MCF 10A (cell line): ENCODE measurements at regions of chr13 and their contacts with region 1.

Region 1: GRCh38 chr13:19289180-19289579 is 107.6 kb upstream of the TUBA3C start:
- DNase-seq: no peak
- H3K4me3 Mint-ChIP-seq: no peak overlapping the region
- H3K27ac Mint-ChIP-seq: no peak overlapping the region
- H3K4me1 Mint-ChIP-seq: no peaks in the 10 kb centered on the region
- H3K27me3 Mint-ChIP-seq: peaks cover 81% of the 10 kb centered on the region
- CTCF ChIP-seq: no peak

Region 2: GRCh38 chr13:19153782-19154450 is 135.3 kb before region 1 on chr13:
- CTCF ChIA-PET with region 1: no interaction called
- POLR2A ChIA-PET with region 1: no interaction called
- intact Hi-C with region 1: loop called (anchors 5 kb)
- DNase-seq: no peak
- H3K4me3 Mint-ChIP-seq: no peak overlapping the region
- H3K27ac Mint-ChIP-seq: no peak overlapping the region
- H3K4me1 Mint-ChIP-seq: no peaks in the 10 kb centered on the region
- H3K27me3 Mint-ChIP-seq: no peaks in the 10 kb centered on the region
- CTCF ChIP-seq: peak; percentile 26

Region 3: DNA sequence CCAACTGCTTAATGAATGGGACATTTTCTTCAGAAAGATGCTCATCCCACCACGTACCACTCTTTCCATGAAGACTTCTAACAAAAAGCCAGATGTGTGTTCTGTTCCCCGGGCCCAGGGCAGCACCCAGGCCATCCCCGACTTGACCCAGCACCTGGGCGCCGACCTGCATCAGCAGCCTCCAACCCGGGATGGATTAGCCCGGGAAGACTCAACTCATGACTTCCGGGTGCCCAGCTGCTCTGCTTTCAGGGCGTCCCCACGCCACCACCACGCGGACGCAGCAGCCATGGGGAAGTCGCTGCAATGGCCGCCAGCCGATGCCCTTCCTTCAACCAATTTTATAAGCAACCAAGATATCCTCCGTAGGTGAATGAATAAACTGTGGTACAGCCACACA is 16.3 kb after region 1 on chr13:
- CTCF ChIA-PET with region 1: no interaction called
- POLR2A ChIA-PET with region 1: no interaction called
- intact Hi-C with region 1: no loop called
- DNase-seq: no peak
- H3K4me3 Mint-ChIP-seq: no peak overlapping the region
- H3K27ac Mint-ChIP-seq: no peak overlapping the region
- H3K4me1 Mint-ChIP-seq: no peaks in the 10 kb centered on the region
- H3K27me3 Mint-ChIP-seq: peaks cover 41% of the 10 kb centered on the region
- CTCF ChIP-seq: no peak